ENCODE measurements at regions of chr4 and their contacts with region 1.

Region 1: GRCh38 chr4:762211-763190 is 56.9 kb downstream of the PCGF3 start:
- DNase-seq: peak; percentile 17
- ATAC-seq: peak in 1 of 2 donors; percentile 4

Region 2: DNA sequence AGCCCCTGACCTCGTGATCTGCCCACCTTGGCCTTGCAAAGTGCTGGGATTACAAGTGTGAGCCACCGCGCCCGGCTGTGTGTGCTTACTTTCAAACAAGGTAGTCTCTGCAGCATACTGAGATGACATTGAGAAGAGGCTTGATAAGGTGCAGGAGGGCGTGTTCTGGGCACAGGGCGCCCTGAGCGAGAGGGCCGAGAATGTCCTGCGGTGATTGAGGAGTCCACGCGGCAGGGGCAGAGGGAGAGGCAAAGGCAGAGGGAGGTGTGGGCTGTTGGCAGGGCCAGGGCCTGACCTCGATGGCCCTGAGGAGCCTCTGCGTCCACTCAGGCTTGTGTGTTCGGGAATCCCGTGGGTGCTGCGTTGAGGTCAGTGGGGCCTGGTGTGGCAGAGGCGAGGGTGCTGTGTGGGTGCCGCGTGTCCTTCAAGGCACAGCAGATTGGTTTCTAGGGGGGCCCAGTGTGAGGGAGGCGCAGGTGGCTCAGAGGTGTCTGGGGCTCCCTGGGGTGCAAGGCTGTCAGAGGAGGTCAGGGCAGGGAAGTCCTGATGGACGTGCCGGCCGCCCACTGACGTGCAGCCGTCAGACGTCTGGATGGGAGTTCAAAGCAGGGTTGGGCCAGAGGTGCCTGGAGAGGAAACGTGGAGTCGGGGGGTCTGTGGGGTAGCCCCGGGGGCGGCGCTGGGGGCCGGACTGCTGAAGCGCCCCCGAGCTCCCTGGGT is 44.7 kb before region 1 on chr4:
- intact Hi-C with region 1: loop called in 1 of 2 experiments (anchors 10 kb)
- DNase-seq: no peak
- ATAC-seq: no peak

Measured in left cardiac atrium (tissue), 4 donors.